Sigmoid colon (tissue), 7 donors: ENCODE measurements at regions of chr3 and their contacts with region 1.

Region 1: DNA sequence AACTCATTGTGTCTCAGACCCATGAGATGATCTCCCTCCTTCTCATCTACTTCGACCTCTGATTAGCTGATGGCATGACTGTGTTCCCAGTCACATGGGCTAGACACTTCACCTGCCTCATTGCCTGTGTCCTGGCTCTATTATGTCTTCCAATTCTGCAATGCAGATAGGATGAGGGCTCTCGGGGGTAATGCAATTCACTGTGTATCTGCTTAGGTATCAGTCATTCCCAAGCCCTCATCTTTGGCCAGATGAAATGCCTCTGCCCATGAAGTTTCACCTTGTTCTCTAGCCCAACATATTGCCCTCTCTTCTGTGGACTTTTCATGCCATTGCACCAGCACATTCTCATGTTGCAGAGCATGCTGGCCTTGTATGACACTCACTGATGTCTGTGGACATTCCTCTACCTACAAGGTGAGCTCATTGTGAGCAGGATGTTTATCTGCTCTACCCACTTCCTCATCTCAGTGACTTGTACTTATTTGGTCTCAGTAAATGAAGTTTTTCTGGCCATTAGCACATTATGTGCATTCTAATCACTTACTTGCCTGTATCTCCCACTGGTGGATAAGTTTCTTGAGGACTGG is 32.3 kb downstream of the MOBP start:
- DNase-seq: no peak
- H3K4me3 ChIP-seq: no peak overlapping the region
- H3K27ac ChIP-seq: no peak overlapping the region
- H3K4me1 ChIP-seq: peaks cover 0 to 5% (median 0%) of the 10 kb centered on the region in 4 donors
- H3K27me3 ChIP-seq: peaks cover 12 to 41% (median 22%) of the 10 kb centered on the region in 3 donors
- CTCF ChIP-seq: no peak
- EP300 ChIP-seq: no peak
- POLR2A ChIP-seq: no peak

Region 2: GRCh38 chr3:39447637-39448483 is 51.9 kb before region 1 on chr3:
- intact Hi-C with region 1: loop called (anchors 2 kb)
- DNase-seq: peak; percentile 74
- H3K4me3 ChIP-seq: no peak overlapping the region
- H3K27ac ChIP-seq: no peak overlapping the region
- H3K4me1 ChIP-seq: peaks cover 0 to 3% (median 1%) of the 10 kb centered on the region in 4 donors
- H3K27me3 ChIP-seq: no peaks in the 10 kb centered on the region
- CTCF ChIP-seq: peak; percentile 65 to 85 (median 78)
- EP300 ChIP-seq: no peak
- POLR2A ChIP-seq: no peak

Region 3: GRCh38 chr3:39550354-39551051 is 50.8 kb after region 1 on chr3:
- intact Hi-C with region 1: no loop called
- DNase-seq: no peak
- H3K4me3 ChIP-seq: no peak overlapping the region
- H3K27ac ChIP-seq: no peak overlapping the region
- H3K4me1 ChIP-seq: no peaks in the 10 kb centered on the region
- H3K27me3 ChIP-seq: no peaks in the 10 kb centered on the region
- CTCF ChIP-seq: no peak
- EP300 ChIP-seq: no peak
- POLR2A ChIP-seq: no peak